Heart right ventricle (tissue), 16 donors: ENCODE measurements at regions of chr2 and their contacts with region 1.

Region 1: GRCh38 chr2:134261398-134262131 is 7.7 kb downstream of the MGAT5 start:
- DNase-seq: no peak
- ATAC-seq: peak in 7 of 8 donors; percentile 25 to 73 (median 63)
- H3K4me3 ChIP-seq: no peak overlapping the region
- H3K27ac ChIP-seq: peak overlapping the region; percentile 45 to 82 (median 78)
- H3K4me1 ChIP-seq: peaks cover 33 to 75% (median 63%) of the 10 kb centered on the region in 9 donors
- H3K27me3 ChIP-seq: no peaks in the 10 kb centered on the region
- CTCF ChIP-seq: no peak

Region 2: DNA sequence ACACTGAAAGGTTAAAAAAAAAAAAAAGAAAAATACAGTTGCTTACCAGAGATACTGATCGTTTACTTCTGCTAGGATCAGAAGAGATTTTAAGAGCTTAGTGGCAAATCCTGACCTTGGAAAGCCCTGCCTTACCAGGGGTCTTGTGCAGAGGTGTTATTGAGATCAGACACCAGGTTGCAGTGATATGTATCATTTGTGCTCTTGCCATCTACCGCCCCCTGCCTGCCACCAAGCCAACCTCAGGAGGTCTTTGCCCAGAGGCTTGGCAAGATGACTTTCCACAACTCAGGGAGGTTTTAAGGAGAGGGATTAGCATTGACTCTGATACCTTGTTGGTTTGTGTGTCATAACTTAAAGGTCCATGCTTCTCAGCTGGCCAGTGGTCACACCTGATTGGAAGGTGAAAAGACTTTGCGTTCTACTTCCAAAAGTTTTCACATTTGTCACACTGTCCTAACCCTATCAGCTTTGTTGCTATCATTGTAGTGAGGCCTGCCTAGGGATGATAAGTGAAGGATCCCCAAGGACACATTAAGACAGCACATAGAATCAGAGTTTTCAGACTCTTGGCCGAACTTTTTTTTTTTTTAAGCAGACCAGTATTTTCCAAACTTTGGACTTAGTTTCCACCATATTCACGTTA is 53.9 kb before region 1 on chr2:
- intact Hi-C with region 1: loop called in 1 of 10 experiments (anchors 10 kb)
- DNase-seq: peak; percentile 52 to 60
- ATAC-seq: peak; percentile 63 to 86 (median 80)
- H3K4me3 ChIP-seq: no peak overlapping the region
- H3K27ac ChIP-seq: peak overlapping the region in 5 of 10 donors; percentile 3 to 63 (median 36)
- H3K4me1 ChIP-seq: peaks cover 14 to 58% (median 47%) of the 10 kb centered on the region in 9 donors
- H3K27me3 ChIP-seq: no peaks in the 10 kb centered on the region
- CTCF ChIP-seq: peak; percentile 38 to 76 (median 66)

Region 3: GRCh38 chr2:134301099-134301927 is 39.7 kb after region 1 on chr2:
- intact Hi-C with region 1: loop called in 1 of 10 experiments (anchors 5 kb)
- DNase-seq: no peak
- ATAC-seq: peak; percentile 77 to 93 (median 87)
- H3K4me3 ChIP-seq: peak overlapping the region in 4 of 10 donors; percentile 5 to 25 (median 21)
- H3K27ac ChIP-seq: peak overlapping the region in 9 of 10 donors; percentile 45 to 87 (median 67)
- H3K4me1 ChIP-seq: peaks cover 0 to 66% (median 36%) of the 10 kb centered on the region in 9 donors
- H3K27me3 ChIP-seq: no peaks in the 10 kb centered on the region
- CTCF ChIP-seq: no peak